ENCODE measurements at regions of chr12 and their contacts with region 1.

Region 1: DNA sequence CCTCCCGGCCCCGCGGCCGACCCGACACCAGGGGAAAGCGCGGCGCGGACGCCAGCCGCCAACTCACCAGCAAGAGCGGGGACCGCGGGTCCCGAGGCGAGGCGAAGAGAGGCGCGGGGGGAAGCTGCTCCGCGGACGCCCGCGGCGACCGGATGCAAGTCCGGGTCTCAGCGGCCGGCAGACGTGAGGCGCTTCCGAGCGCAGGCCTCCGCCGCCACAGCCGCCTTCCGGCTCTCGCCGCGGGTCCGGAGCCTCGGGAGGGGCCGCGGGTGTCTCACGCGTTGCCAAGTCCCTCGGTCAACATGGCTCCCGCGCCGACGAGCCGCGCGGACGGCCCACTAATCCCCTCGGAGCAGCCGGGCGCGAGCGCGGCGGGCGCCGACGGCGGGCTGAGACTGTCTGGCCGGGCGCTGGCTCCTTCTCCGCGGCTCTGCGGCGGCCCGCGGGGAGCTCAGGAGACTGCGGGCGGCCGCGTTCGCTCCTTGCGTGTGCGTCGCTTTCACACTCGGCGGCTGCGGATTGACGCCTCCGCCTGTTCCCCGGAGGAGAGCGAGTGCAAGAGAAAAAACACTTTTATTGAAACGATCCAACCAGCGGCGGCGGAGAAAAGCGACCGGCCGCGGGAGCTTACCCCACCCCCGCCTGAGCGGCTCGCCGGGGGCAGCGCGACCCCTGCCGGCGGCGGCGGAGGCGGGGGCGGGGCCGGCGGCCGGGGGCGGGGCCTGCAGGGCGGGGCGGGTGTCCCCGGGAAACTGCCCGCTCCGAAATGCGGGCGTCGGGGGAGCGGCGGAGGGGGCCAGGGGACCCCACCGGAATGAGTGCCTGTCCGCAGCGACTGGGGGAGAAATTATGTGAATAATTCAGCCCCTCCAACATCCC is at the start of gene CDK17:
- DNase-seq: peak; percentile 94
- H3K4me3 ChIP-seq: peak within 1 kb of the TSS; percentile 76 to 96 (median 92)
- H3K27ac ChIP-seq: peak within 1 kb of the TSS; percentile 97 to 100 (median 99)
- H3K4me1 ChIP-seq: peaks cover 0 to 39% (median 23%) of the 10 kb centered on the region in 4 donors
- H3K27me3 ChIP-seq: no peaks in the 10 kb centered on the region
- CTCF ChIP-seq: no peak
- EP300 ChIP-seq: no peak
- POLR2A ChIP-seq: peak; percentile 45 to 67
- total RNA-seq, gene CDK17: 63.2 to 117 (median 82.0) TPM

Region 2: GRCh38 chr12:95986635-95987570 is 413.3 kb before region 1 on chr12:
- intact Hi-C with region 1: no loop called
- DNase-seq: no peak
- H3K4me3 ChIP-seq: no peak overlapping the region
- H3K27ac ChIP-seq: no peak overlapping the region
- H3K4me1 ChIP-seq: peaks cover 0 to 9% (median 3%) of the 10 kb centered on the region in 4 donors
- H3K27me3 ChIP-seq: no peaks in the 10 kb centered on the region
- CTCF ChIP-seq: no peak
- EP300 ChIP-seq: no peak
- POLR2A ChIP-seq: no peak

Region 3: GRCh38 chr12:96035278-96036236 is 364.6 kb before region 1 on chr12 and contains the start of gene LTA4H:
- intact Hi-C with region 1: loop called (anchors 10 kb)
- DNase-seq: peak; percentile 99
- H3K4me3 ChIP-seq: peak within 1 kb of the TSS; percentile 68 to 95 (median 85)
- H3K27ac ChIP-seq: peak within 1 kb of the TSS; percentile 84 to 93 (median 88)
- H3K4me1 ChIP-seq: peaks cover 3 to 25% (median 19%) of the 10 kb centered on the region in 4 donors
- H3K27me3 ChIP-seq: no peaks in the 10 kb centered on the region
- CTCF ChIP-seq: no peak
- EP300 ChIP-seq: no peak
- POLR2A ChIP-seq: peak; percentile 54 to 81
- total RNA-seq, gene LTA4H: 58.5 to 77.3 (median 69.1) TPM

Region 4: GRCh38 chr12:96195845-96196451 is 204.2 kb before region 1 on chr12:
- intact Hi-C with region 1: loop called (anchors 1 kb)
- DNase-seq: no peak
- H3K4me3 ChIP-seq: peak overlapping the region; percentile 52 to 85 (median 72)
- H3K27ac ChIP-seq: peak overlapping the region; percentile 81 to 88 (median 84)
- H3K4me1 ChIP-seq: peaks cover 0 to 40% (median 23%) of the 10 kb centered on the region in 4 donors
- H3K27me3 ChIP-seq: no peaks in the 10 kb centered on the region
- CTCF ChIP-seq: no peak
- EP300 ChIP-seq: no peak
- POLR2A ChIP-seq: no peak

Region 5: DNA sequence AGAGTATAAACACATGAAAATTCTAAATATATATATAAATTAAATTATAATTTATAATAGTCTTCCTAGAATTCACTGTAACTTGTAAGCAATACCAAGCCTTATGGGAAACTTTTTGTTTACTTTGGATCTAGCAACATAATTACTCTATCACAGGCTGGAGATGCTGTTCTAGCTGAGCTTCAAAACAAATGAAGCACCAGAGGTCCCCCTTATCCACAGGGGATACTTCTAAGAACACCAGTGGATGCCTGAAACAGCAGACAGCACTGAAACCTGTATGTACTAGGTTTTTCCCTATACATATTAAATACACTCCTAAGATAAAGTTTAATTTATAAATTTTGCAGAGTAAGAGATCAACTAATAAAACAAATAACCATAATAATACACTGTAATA is 96.5 kb before region 1 on chr12:
- intact Hi-C with region 1: loop called (anchors 10 kb)
- DNase-seq: no peak
- H3K4me3 ChIP-seq: no peak overlapping the region
- H3K27ac ChIP-seq: peak overlapping the region in 1 of 4 donors; percentile 29
- H3K4me1 ChIP-seq: peaks cover 0 to 43% (median 34%) of the 10 kb centered on the region in 4 donors
- H3K27me3 ChIP-seq: no peaks in the 10 kb centered on the region
- CTCF ChIP-seq: no peak
- EP300 ChIP-seq: no peak
- POLR2A ChIP-seq: no peak

Region 6: GRCh38 chr12:96489103-96490056 is 89.2 kb after region 1 on chr12 and contains the start of gene CFAP54:
- intact Hi-C with region 1: loop called (anchors 2 kb)
- DNase-seq: peak; percentile 97
- H3K4me3 ChIP-seq: peak within 1 kb of the TSS; percentile 62 to 76 (median 66)
- H3K27ac ChIP-seq: peak within 1 kb of the TSS; percentile 71 to 88 (median 75)
- H3K4me1 ChIP-seq: peaks cover 0 to 10% (median 4%) of the 10 kb centered on the region in 4 donors
- H3K27me3 ChIP-seq: no peaks in the 10 kb centered on the region
- CTCF ChIP-seq: peak; percentile 67 to 86 (median 79)
- EP300 ChIP-seq: peak in 2 of 4 donors; percentile 54 to 73
- POLR2A ChIP-seq: no peak
- total RNA-seq, gene CFAP54: 1.1 to 10.5 (median 4.1) TPM